Activated CD8-positive, alpha-beta T cell treated with anti-CD3 and anti-CD28 coated beads, Interleukin-2, amount 10 ng/mL, durations not matched to agents 7 days and 5 days (primary cell): ENCODE measurements at regions of chr1 and their contacts with region 1.

Region 1: DNA sequence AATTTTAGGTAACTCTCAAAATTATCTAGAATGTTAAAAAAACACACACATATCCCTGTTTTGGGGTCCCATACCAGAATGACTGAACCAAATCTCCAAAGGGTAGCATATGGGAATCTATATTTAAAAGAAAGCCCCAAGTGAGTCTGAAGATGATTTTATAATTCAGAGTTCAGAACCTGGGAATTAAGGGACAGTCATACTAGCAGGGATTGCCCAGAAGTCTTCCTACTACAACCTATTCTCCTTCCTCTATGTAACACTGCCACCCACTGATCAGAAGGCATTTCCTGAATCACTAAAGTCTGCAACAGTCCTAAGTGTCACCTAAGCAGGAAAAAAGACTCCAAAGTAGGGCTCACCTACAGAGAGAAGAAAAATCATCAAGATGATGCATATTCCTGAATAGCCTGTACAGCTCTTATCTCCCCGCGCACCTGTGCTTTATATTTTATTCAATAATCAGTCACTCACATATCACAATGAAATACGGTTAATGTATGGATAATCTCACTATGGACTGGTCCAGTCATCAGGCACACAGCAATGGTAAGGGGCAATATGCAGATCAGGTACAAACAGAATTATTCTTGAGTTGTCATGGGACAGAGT is 4.9 kb downstream of the RGS1 start:
- DNase-seq: peak; percentile 36
- ATAC-seq: peak; percentile 47
- H3K4me3 Mint-ChIP-seq: no peak overlapping the region
- H3K27ac Mint-ChIP-seq: no peak overlapping the region
- H3K4me1 Mint-ChIP-seq: peaks cover 48% of the 10 kb centered on the region
- H3K27me3 Mint-ChIP-seq: peaks cover 2% of the 10 kb centered on the region

Region 2: DNA sequence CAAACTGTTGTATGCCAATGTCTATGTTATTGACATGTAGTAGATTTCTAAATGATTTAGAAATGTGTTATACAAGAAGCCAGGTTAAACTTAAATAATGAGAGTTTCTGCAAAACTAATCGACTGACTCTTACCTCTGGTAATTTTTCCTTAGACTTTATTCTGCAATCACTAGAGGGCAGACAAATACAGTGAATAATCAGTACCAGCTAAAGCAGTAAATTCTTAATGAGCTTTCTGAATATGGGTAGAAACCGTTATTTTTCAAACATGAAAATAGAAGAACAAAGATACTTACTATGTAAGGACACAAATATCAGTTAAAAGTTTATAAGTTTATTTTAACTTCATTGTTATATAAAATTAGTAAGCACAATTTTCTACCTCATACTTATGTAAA is 102.8 kb before region 1 on chr1:
- CTCF ChIA-PET with region 1: interaction called, 120 read pairs
- POLR2A ChIA-PET with region 1: interaction called, 3 read pairs
- DNase-seq: no peak
- ATAC-seq: peak; percentile 55
- H3K4me3 Mint-ChIP-seq: no peak overlapping the region
- H3K27ac Mint-ChIP-seq: no peak overlapping the region
- H3K4me1 Mint-ChIP-seq: no peaks in the 10 kb centered on the region
- H3K27me3 Mint-ChIP-seq: peaks cover 7% of the 10 kb centered on the region

Region 3: GRCh38 chr1:192506741-192507155 is 73.7 kb before region 1 on chr1:
- CTCF ChIA-PET with region 1: interaction called, 21 read pairs
- POLR2A ChIA-PET with region 1: no interaction called
- DNase-seq: no peak
- ATAC-seq: peak; percentile 49
- H3K4me3 Mint-ChIP-seq: no peak overlapping the region
- H3K27ac Mint-ChIP-seq: no peak overlapping the region
- H3K4me1 Mint-ChIP-seq: no peaks in the 10 kb centered on the region
- H3K27me3 Mint-ChIP-seq: no peaks in the 10 kb centered on the region

Region 4: GRCh38 chr1:192516776-192517297 is 63.6 kb before region 1 on chr1:
- CTCF ChIA-PET with region 1: interaction called, 36 read pairs
- POLR2A ChIA-PET with region 1: interaction called, 7 read pairs
- DNase-seq: peak; percentile 74
- ATAC-seq: peak; percentile 98
- H3K4me3 Mint-ChIP-seq: peak overlapping the region; percentile 67
- H3K27ac Mint-ChIP-seq: peak overlapping the region; percentile 86
- H3K4me1 Mint-ChIP-seq: peaks cover 48% of the 10 kb centered on the region
- H3K27me3 Mint-ChIP-seq: no peaks in the 10 kb centered on the region

Region 5: DNA sequence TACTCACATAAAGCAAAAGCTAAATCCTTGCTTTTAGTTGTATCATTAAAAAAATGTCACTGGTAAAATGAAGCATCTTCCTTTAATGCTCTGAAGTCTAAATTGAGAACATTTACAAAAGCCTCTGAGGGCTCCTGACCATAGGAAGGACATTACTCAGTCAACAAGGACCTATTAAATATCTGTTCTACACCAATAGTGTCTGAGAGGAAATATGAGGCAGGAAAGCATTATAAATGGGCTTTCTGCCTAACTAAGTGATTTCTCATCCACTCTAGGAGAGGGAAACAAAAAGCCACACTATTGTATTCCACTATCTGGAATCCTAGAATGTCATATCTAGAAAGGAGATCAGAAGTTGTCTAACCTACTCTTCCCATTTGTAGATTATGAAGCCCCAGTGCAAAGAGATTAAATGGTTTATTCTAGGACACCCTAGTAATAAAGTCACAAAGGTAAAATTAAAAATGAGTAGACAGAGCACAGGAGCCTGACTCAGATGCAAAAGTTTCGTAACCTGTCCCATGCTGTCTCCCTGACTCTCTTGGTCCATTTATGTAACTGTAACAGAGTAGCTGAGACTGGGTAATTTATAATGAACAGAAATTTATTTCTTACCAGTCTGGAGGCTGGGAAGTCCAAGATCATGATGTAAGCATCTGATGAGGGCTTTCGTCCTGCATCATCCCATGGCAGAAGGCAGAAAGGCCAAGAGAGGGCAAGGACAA is 12.7 kb after region 1 on chr1:
- CTCF ChIA-PET with region 1: interaction called, 10 read pairs
- POLR2A ChIA-PET with region 1: interaction called, 6 read pairs
- DNase-seq: no peak
- ATAC-seq: no peak
- H3K4me3 Mint-ChIP-seq: no peak overlapping the region
- H3K27ac Mint-ChIP-seq: no peak overlapping the region
- H3K4me1 Mint-ChIP-seq: peaks cover 4% of the 10 kb centered on the region
- H3K27me3 Mint-ChIP-seq: peaks cover 18% of the 10 kb centered on the region

Region 6: DNA sequence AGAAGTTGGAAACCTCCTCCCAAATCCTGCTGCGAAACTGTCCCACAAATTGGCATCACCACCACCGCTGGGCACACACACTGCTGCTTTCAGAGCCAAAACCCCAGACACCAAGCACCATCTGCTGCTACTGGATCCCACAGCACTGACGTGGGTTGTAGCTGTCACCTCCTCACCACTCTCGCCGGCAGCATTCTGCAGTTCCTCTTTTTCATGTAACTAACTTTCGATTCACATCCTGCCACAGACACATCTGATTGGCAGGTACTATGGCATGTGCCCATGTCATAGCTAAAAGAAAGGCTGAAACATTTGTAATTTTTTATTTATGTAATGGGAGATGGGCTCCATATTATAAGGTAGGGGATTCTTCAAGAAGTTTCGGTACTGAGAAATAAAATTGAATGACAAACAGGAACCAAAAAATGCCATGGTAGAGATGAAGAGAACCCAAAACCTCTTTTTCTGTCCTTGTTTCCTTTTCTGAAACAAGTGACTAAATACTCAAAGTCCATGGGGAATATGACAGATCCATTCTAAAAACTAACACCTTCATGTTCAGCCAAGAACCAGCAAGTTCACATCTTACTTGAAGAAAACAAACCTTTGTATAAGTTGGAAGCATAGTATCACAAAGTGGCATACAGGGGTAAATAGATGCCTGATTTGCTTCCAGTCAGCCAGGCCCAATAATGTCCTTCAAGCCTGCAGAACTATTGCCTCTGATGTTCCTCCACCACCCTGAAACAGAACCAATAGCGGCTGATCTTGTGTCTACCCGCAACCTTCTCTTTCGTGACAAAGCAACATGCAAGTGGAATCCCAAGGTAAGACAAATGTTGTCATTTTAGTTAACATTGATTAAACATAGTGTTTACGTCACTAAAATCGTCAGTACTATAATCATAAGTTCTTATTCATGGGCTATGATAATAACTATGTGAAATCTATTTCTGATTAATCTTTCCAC is 28.9 kb after region 1 on chr1:
- CTCF ChIA-PET with region 1: interaction called, 26 read pairs
- POLR2A ChIA-PET with region 1: no interaction called
- DNase-seq: peak; percentile 80
- ATAC-seq: peak; percentile 99
- H3K4me3 Mint-ChIP-seq: peak overlapping the region; percentile 65
- H3K27ac Mint-ChIP-seq: peak overlapping the region; percentile 83
- H3K4me1 Mint-ChIP-seq: peaks cover 17% of the 10 kb centered on the region
- H3K27me3 Mint-ChIP-seq: no peaks in the 10 kb centered on the region

Region 7: GRCh38 chr1:192639607-192640368 is 59.3 kb after region 1 on chr1:
- CTCF ChIA-PET with region 1: no interaction called
- POLR2A ChIA-PET with region 1: no interaction called
- DNase-seq: no peak
- ATAC-seq: no peak
- H3K4me3 Mint-ChIP-seq: no peak overlapping the region
- H3K27ac Mint-ChIP-seq: no peak overlapping the region
- H3K4me1 Mint-ChIP-seq: no peaks in the 10 kb centered on the region
- H3K27me3 Mint-ChIP-seq: peaks cover 1% of the 10 kb centered on the region